OCI-LY7 (cell line): ENCODE measurements at regions of chr4 and their contacts with region 1.

Region 1: GRCh38 chr4:40908702-40909362 is 159.1 kb downstream of the NSUN7 start:
- DNase-seq: peak; percentile 86
- H3K4me3 ChIP-seq: no peak overlapping the region
- H3K27ac ChIP-seq: no peak overlapping the region
- H3K4me1 ChIP-seq: peaks cover 5% of the 10 kb centered on the region
- CTCF ChIP-seq: peak; percentile 95

Region 2: DNA sequence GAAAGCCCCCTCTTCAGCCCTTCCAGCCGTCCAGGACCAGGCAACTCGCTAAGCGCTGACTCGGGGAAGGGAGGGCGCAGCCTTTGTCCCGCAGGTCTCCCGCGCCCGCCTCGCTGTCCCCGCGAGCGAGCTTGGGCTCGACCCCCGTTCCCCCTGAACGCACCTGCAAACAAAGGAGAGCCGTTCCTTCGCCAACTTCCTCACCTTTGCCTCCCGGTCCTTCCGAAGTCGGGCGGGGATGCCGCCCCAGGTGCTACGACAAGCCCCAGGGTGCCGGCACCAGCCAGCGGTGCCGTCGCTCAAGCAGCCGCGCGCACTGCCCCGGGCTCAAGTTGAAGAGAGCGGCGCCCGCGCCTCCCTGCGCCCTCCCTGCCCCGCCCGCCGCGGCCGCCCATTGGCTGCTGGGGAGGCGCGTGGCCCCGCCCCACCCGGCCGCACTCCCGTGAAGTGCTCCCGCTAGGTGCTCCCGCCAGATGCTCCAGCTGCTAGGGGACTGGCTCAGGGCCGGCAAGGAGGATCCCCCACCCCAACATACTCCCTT is 51.9 kb before region 1 on chr4:
- CTCF ChIA-PET with region 1: no interaction called
- POLR2A ChIA-PET with region 1: no interaction called
- intact Hi-C with region 1: no loop called
- DNase-seq: peak; percentile 79
- H3K4me3 ChIP-seq: peak overlapping the region; percentile 71
- H3K27ac ChIP-seq: no peak overlapping the region
- H3K4me1 ChIP-seq: peaks cover 31% of the 10 kb centered on the region
- CTCF ChIP-seq: no peak

Region 3: DNA sequence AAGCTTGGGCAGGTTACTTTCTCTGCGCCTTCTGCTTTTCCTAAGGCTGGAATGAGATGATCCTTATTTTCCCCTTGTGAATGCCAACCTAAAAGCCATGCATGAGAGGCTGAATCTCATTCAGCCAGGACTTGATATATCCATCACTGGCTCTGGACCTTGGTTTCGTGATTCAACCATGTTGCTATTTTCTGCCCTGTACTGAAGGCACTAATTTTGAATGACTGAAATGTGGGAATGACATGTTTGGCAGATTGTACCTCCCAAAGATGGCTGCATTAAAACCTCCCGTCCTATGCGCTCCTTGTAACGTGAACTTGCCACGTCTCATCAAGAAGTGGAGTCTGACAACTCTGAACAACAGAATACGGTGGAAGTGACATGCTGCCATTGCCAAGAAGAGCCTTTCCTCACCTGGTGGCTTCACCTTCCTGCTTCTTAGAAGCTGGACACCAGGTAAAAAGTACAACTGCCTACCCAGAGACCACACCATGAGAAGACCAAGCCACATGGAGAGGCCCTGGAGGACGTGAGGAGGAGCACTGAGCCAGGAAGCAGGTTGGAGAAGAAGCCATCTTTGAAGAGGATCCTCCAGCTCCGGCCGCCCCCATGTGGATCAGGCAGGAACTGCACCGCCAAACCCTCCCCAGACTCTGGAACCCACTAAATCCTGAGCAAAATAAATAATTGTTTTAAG is 15.4 kb after region 1 on chr4:
- CTCF ChIA-PET with region 1: interaction called, 4 read pairs
- POLR2A ChIA-PET with region 1: no interaction called
- intact Hi-C with region 1: loop called (anchors 1 kb)
- DNase-seq: peak; percentile 74
- H3K4me3 ChIP-seq: no peak overlapping the region
- H3K27ac ChIP-seq: no peak overlapping the region
- H3K4me1 ChIP-seq: no peaks in the 10 kb centered on the region
- CTCF ChIP-seq: peak; percentile 94

Region 4: GRCh38 chr4:41661442-41662076 is 752.7 kb after region 1 on chr4:
- CTCF ChIA-PET with region 1: no interaction called
- POLR2A ChIA-PET with region 1: no interaction called
- intact Hi-C with region 1: loop called (anchors 5 kb)
- DNase-seq: peak; percentile 46
- H3K4me3 ChIP-seq: no peak overlapping the region
- H3K27ac ChIP-seq: no peak overlapping the region
- H3K4me1 ChIP-seq: no peaks in the 10 kb centered on the region
- CTCF ChIP-seq: peak; percentile 99